MCF 10A (cell line): ENCODE measurements at regions of chr1 and their contacts with region 1.

Region 1: DNA sequence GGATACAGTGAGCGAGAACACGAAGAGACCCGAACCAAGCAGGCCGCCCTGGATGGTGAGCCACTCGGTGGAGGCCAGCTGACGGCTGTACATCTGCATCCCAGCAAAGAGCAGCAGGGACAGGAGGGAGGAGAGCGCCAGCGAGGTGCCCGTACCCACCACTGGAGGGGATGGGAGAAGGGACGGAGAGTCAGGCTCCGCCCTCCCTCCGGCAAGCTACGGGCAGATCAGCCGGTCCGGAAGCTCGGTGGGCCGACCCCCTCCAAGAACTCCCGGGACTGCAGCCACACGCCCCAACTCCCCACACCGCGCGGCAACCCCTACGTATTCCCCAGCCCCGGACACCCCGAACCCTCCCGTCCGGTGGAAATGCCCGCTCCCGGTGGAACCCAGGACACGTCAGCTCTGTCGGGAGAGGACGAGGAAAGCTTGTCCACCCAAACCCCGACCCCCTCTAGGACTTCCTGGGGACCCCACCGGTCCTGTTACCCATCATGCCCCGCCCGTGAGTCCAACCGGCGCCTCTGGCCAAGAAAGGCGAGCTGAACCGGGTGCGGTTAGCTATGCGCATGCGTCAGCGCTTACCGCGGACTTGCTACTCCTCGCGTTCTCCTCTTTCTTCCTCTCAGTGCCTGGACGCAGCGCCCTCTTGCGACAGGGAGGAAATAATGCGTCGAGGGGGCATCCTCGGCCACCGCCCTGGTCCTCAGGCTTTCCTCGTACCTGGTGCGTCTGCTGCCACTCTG is at the start of gene KRTCAP2:
- DNase-seq: peak; percentile 98
- H3K4me3 Mint-ChIP-seq: peak within 1 kb of the TSS; percentile 87
- H3K27ac Mint-ChIP-seq: peak within 1 kb of the TSS; percentile 95
- H3K4me1 Mint-ChIP-seq: peaks cover 46% of the 10 kb centered on the region
- H3K27me3 Mint-ChIP-seq: no peaks in the 10 kb centered on the region
- CTCF ChIP-seq: peak; percentile 97
- total RNA-seq, gene KRTCAP2: 313 and 383 TPM in 2 replicates

Region 2: DNA sequence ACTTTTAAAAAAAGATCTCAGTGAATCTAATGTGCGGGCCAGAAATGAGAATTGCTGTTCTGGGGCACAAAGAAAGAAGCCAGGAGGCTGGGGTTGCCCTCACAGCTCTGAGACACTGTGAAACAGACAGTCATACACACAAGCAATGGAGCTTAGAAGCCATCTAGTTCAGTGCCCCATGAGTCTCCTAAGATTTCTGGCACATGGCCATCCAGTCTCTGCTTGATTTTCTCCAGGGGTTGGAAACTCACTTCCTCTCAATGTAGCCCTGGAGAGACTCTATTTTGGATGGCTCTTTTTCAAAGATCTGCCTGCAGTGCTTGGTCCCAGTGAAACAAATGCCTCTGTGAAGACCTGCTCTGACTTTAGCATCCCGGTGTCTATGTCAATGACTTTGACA is 341.4 kb before region 1 on chr1:
- CTCF ChIA-PET with region 1: no interaction called
- POLR2A ChIA-PET with region 1: no interaction called
- intact Hi-C with region 1: no loop called
- DNase-seq: no peak
- H3K4me3 Mint-ChIP-seq: no peak overlapping the region
- H3K27ac Mint-ChIP-seq: no peak overlapping the region
- H3K4me1 Mint-ChIP-seq: no peaks in the 10 kb centered on the region
- H3K27me3 Mint-ChIP-seq: peaks cover 58% of the 10 kb centered on the region
- CTCF ChIP-seq: no peak

Region 3: GRCh38 chr1:155050560-155051341 is 122.2 kb before region 1 on chr1 and contains the start of gene ADAM15:
- CTCF ChIA-PET with region 1: interaction called, 13 read pairs
- POLR2A ChIA-PET with region 1: no interaction called
- intact Hi-C with region 1: no loop called
- DNase-seq: peak; percentile 84
- H3K4me3 Mint-ChIP-seq: peak within 1 kb of the TSS; percentile 90
- H3K27ac Mint-ChIP-seq: peak within 1 kb of the TSS; percentile 80
- H3K4me1 Mint-ChIP-seq: peaks cover 33% of the 10 kb centered on the region
- H3K27me3 Mint-ChIP-seq: no peaks in the 10 kb centered on the region
- CTCF ChIP-seq: peak; percentile 99
- total RNA-seq, gene ADAM15: 385 and 456 TPM in 2 replicates

Region 4: DNA sequence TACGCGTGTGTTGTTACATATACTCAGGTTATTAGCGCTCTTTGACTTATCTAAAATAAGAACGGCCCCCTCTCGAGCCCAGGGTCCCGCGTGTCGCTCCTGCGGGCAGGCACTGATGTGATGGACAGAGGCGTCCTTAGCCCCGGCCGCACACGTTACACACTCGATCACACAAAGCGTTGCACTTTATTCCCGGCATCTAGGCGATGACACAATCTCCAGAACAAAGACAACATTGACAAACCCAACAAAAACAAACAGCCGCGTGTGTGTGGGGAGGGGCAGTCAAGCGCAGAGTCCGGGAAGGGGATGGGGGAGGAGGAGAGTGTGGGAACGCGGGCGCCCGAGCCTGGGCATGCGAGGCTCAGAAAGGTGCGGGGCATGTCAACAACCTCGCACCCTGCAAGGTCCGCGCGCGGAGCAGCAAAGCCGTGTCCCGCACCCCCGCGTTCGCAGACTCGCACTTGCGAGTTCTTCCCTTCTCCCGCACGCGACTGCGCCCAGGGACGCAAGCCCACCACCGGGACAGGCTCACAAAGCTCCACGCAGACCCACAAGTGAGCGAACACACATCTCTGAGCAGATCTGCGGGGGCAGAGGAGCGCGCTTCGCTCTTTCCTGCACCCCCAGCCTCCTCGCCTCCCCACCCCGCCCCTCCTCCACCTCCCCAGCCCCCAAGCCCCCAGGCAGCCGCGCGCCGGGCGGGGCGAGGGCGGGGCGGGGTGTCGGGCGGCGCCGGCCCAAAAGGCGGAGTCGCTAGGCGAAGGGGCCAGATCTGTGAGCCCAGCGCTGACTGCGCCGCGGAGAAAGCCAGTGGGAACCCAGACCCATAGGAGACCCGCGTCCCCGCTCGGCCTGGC is 45.6 kb before region 1 on chr1 and contains the start of gene EFNA1:
- CTCF ChIA-PET with region 1: interaction called, 36 read pairs
- POLR2A ChIA-PET with region 1: interaction called, 75 read pairs
- intact Hi-C with region 1: no loop called
- DNase-seq: peak; percentile 99
- H3K4me3 Mint-ChIP-seq: peak within 1 kb of the TSS; percentile 100
- H3K27ac Mint-ChIP-seq: peak within 1 kb of the TSS; percentile 90
- H3K4me1 Mint-ChIP-seq: peaks cover 60% of the 10 kb centered on the region
- H3K27me3 Mint-ChIP-seq: no peaks in the 10 kb centered on the region
- CTCF ChIP-seq: no peak
- total RNA-seq, gene EFNA1: 38.9 and 42.3 TPM in 2 replicates

Region 5: GRCh38 chr1:155158979-155159378 is 13.9 kb before region 1 on chr1:
- CTCF ChIA-PET with region 1: interaction called, 21 read pairs
- POLR2A ChIA-PET with region 1: interaction called, 8 read pairs
- intact Hi-C with region 1: no loop called
- DNase-seq: no peak
- H3K4me3 Mint-ChIP-seq: no peak overlapping the region
- H3K27ac Mint-ChIP-seq: no peak overlapping the region
- H3K4me1 Mint-ChIP-seq: no peaks in the 10 kb centered on the region
- H3K27me3 Mint-ChIP-seq: peaks cover 15% of the 10 kb centered on the region
- CTCF ChIP-seq: no peak

Region 6: GRCh38 chr1:155202731-155203505 is 30.0 kb after region 1 on chr1:
- CTCF ChIA-PET with region 1: interaction called, 23 read pairs
- POLR2A ChIA-PET with region 1: interaction called, 215 read pairs
- intact Hi-C with region 1: loop called (anchors 1 kb)
- DNase-seq: no peak
- H3K4me3 Mint-ChIP-seq: no peak overlapping the region
- H3K27ac Mint-ChIP-seq: no peak overlapping the region
- H3K4me1 Mint-ChIP-seq: peaks cover 11% of the 10 kb centered on the region
- H3K27me3 Mint-ChIP-seq: no peaks in the 10 kb centered on the region
- CTCF ChIP-seq: no peak

Region 7: GRCh38 chr1:155244368-155245162 is 71.7 kb after region 1 on chr1:
- CTCF ChIA-PET with region 1: interaction called, 4 read pairs
- POLR2A ChIA-PET with region 1: interaction called, 5 read pairs
- intact Hi-C with region 1: loop called (anchors 1 kb)
- DNase-seq: peak; percentile 100
- H3K4me3 Mint-ChIP-seq: peak overlapping the region; percentile 70
- H3K27ac Mint-ChIP-seq: peak overlapping the region; percentile 29
- H3K4me1 Mint-ChIP-seq: peaks cover 24% of the 10 kb centered on the region
- H3K27me3 Mint-ChIP-seq: no peaks in the 10 kb centered on the region
- CTCF ChIP-seq: peak; percentile 38